ENCODE measurements at regions of chr15 and their contacts with region 1.

Region 1: GRCh38 chr15:40684381-40684780 is 10.6 kb upstream of the RAD51 start:
- DNase-seq: no peak
- H3K4me3 Mint-ChIP-seq: no peak overlapping the region
- H3K27ac Mint-ChIP-seq: no peak overlapping the region
- H3K4me1 Mint-ChIP-seq: no peaks in the 10 kb centered on the region
- H3K27me3 Mint-ChIP-seq: no peaks in the 10 kb centered on the region

Region 2: DNA sequence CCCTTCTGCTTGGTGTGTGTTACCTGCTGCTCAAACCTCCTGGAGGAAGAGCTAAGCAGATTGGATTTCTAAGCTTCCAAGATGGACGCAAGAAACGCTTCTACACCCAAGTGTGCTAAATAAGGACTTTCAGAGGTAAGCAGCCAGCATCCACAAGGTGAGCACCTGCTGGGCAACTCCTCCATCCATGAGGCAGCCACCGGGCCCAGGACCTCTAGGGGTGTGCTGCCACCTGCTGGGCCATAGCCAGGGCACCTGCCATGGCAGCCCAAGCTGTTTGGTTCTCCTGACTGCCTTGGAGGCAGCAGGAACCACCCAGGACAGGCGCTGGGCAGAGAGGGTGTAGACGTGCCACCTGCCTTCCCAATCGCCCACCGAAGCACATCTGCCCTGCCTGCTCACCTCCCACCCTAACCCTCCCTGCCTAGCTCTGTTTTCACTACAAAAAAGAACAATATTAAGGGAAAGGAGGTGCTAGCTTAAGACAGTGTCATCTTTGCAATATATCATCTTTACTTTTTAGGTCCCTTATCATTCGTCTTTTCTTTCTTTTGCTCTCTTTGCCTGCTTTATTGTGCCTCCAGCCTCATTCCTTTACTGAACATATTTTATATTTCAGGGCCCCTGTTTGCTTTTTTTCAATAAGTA is 98.3 kb after region 1 on chr15:
- intact Hi-C with region 1: loop called (anchors 2 kb)
- DNase-seq: peak; percentile 65
- H3K4me3 Mint-ChIP-seq: no peak overlapping the region
- H3K27ac Mint-ChIP-seq: no peak overlapping the region
- H3K4me1 Mint-ChIP-seq: peaks cover 16% of the 10 kb centered on the region
- H3K27me3 Mint-ChIP-seq: no peaks in the 10 kb centered on the region

Region 3: GRCh38 chr15:40886586-40886985 is 202.2 kb after region 1 on chr15:
- intact Hi-C with region 1: loop called (anchors 2 kb)
- DNase-seq: no peak
- H3K4me3 Mint-ChIP-seq: no peak overlapping the region
- H3K27ac Mint-ChIP-seq: no peak overlapping the region
- H3K4me1 Mint-ChIP-seq: peaks cover 8% of the 10 kb centered on the region
- H3K27me3 Mint-ChIP-seq: no peaks in the 10 kb centered on the region